A673 (cell line): ENCODE measurements at regions of chr1 and their contacts with region 1.

Region 1: GRCh38 chr1:182614796-182615454 is 10.7 kb upstream of the RGS16 start:
- DNase-seq: peak; percentile 97
- H3K4me3 ChIP-seq: peak overlapping the region; percentile 50
- H3K27ac ChIP-seq: peak overlapping the region; percentile 100
- H3K4me1 ChIP-seq: peaks cover 81% of the 10 kb centered on the region
- H3K27me3 ChIP-seq: no peaks in the 10 kb centered on the region
- CTCF ChIP-seq: peak; percentile 32; the same call in 1 of the 2 replicates

Region 2: GRCh38 chr1:181099152-181100014 is 1515.5 kb before region 1 on chr1:
- CTCF ChIA-PET with region 1: no interaction called
- POLR2A ChIA-PET with region 1: interaction called, 13 read pairs
- intact Hi-C with region 1: no loop called
- DNase-seq: peak; percentile 93
- H3K4me3 ChIP-seq: peak overlapping the region; percentile 6
- H3K27ac ChIP-seq: peak overlapping the region; percentile 93
- H3K4me1 ChIP-seq: peaks cover 100% of the 10 kb centered on the region
- H3K27me3 ChIP-seq: no peaks in the 10 kb centered on the region
- CTCF ChIP-seq: no peak

Region 3: DNA sequence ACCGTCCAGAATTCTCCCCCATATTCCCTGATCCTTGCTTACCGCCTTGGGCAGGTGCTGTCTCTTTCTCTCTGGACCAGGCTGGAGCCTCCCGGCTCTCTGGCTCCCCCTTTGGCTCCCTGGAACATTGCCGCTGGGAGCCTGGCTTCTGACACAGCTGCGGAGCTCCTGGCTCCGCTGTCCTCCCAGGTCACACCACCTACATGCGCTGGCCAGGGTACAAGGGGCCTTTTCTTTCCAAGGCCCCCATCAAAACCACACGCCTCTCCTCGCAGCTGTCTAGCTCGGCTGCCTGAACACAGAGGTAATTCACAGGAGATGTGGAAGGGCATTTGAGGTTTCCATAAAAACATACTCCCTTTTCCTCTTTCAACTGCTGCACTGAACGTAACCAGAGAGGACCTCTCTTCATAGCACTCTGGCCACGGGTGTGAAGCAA is 545.9 kb before region 1 on chr1:
- CTCF ChIA-PET with region 1: no interaction called
- POLR2A ChIA-PET with region 1: no interaction called
- intact Hi-C with region 1: no loop called
- DNase-seq: peak; percentile 54
- H3K4me3 ChIP-seq: no peak overlapping the region
- H3K27ac ChIP-seq: no peak overlapping the region
- H3K4me1 ChIP-seq: no peaks in the 10 kb centered on the region
- H3K27me3 ChIP-seq: peaks cover 4% of the 10 kb centered on the region
- CTCF ChIP-seq: peak; percentile 75

Region 4: GRCh38 chr1:182568647-182569284 is 46.2 kb before region 1 on chr1:
- CTCF ChIA-PET with region 1: no interaction called
- POLR2A ChIA-PET with region 1: no interaction called
- intact Hi-C with region 1: no loop called
- DNase-seq: no peak
- H3K4me3 ChIP-seq: no peak overlapping the region
- H3K27ac ChIP-seq: no peak overlapping the region
- H3K4me1 ChIP-seq: no peaks in the 10 kb centered on the region
- H3K27me3 ChIP-seq: no peaks in the 10 kb centered on the region
- CTCF ChIP-seq: no peak

Region 5: DNA sequence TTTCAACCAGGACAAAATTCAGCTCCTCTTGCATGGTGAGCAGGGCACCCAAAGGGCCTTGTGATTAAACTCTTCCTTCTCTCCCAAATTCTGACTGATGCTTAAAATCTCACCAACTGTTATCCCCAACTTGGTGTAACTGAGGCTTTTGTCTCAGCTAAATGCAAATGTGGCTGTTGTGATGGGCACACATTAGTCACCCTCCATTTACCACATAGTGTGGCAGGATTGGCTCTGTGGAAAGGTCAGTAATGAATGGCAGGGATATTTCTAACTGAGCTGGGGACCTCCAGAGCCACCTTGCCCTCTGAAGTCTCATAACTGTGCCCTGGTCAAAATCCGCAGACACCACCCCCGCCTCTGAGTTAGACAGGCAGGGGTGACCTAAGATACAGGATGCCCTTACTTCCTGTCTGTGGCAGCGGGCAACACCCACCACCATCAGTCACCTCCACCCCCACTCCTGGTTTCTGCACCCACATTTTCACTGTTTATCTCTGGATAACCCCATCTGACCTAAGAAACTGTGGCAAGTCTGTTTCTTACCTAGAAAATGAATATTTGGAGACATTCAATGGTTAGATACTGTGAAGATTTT is 14.7 kb after region 1 on chr1:
- CTCF ChIA-PET with region 1: no interaction called
- POLR2A ChIA-PET with region 1: interaction called, 10 read pairs
- intact Hi-C with region 1: no loop called
- DNase-seq: no peak
- H3K4me3 ChIP-seq: no peak overlapping the region
- H3K27ac ChIP-seq: no peak overlapping the region
- H3K4me1 ChIP-seq: peaks cover 25% of the 10 kb centered on the region
- H3K27me3 ChIP-seq: no peaks in the 10 kb centered on the region
- CTCF ChIP-seq: no peak

Region 6: GRCh38 chr1:182666706-182667105 is 51.8 kb after region 1 on chr1:
- CTCF ChIA-PET with region 1: no interaction called
- POLR2A ChIA-PET with region 1: no interaction called
- intact Hi-C with region 1: no loop called
- DNase-seq: no peak
- H3K4me3 ChIP-seq: no peak overlapping the region
- H3K27ac ChIP-seq: no peak overlapping the region
- H3K4me1 ChIP-seq: peaks cover 8% of the 10 kb centered on the region
- H3K27me3 ChIP-seq: no peaks in the 10 kb centered on the region
- CTCF ChIP-seq: no peak